Posterior vena cava (tissue), 2 donors: ENCODE measurements at regions of chr22 and their contacts with region 1.

Region 1: GRCh38 chr22:24189249-24190158 is 8.2 kb downstream of the SUSD2 start:
- DNase-seq: peak; percentile 91

Region 2: DNA sequence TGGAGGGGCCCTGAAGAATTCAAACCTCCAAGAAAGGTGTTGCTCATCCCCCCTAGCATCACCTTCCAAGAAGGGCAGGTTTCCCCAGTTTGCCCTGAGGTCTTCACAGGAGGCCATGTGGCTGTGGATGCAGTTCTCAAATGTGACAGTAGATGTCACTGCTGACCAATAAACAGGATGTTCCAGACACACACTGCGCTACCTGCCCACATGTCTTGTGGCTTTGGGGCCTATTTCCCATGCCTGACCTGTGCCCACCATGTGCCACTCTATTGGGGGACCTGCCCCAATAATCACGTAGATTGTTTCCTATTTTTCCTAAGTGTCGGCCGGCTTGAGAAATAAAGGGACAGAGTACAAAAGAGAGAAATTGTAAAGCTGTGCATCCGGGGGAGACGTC is 205.1 kb before region 1 on chr22:
- intact Hi-C with region 1: loop called in 1 of 2 experiments (anchors 10 kb)
- DNase-seq: peak; percentile 58

Region 3: DNA sequence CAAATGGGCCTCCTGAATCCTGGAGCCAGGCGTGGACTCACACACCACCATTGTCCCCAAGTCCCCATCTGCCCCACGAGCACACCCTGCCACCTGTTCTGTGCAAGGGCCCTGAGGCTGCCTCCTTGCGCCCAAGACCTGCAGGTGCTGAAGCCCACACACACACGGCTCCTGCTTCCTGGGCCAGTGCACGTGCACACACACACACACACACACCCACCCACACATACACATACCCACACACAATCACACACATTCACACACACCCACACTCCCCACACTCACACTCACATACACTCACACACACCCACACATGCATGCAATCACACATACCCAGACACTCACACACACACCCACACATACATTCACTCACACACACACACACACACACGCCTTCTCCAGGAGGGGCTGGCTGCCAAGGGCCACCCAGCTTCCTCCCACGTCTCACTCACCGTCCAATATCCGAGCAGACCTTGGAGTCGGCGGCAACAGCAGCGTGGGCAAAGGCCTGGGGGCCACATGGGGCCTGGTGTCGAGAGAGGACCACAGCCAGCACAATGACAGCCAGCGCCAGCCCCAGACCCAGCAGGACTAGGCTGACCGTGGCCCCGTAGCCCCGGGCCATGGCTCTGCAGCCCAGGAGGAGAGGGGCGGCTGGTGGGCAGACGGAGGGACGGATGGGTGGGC is 54.7 kb after region 1 on chr22:
- intact Hi-C with region 1: loop called (anchors 2 to 5 kb)
- DNase-seq: no peak

Region 4: GRCh38 chr22:24400726-24401596 is 211.5 kb after region 1 on chr22:
- intact Hi-C with region 1: no loop called
- DNase-seq: peak; percentile 69

Region 5: GRCh38 chr22:24474221-24474620 is 284.7 kb after region 1 on chr22:
- intact Hi-C with region 1: no loop called
- DNase-seq: no peak